B cell (primary cell): ENCODE measurements at regions of chr12 and their contacts with region 1.

Region 1: GRCh38 chr12:685388-685787 is 22.1 kb upstream of the NINJ2 start:
- DNase-seq: peak; percentile 93
- ATAC-seq: peak; percentile 78
- H3K4me3 ChIP-seq: peak overlapping the region in 4 of 5 experiments; percentile 5 to 31 (median 21)
- H3K4me3 Mint-ChIP-seq: peak overlapping the region; percentile 75
- H3K27ac ChIP-seq: peak overlapping the region; percentile 93 to 98
- H3K27ac Mint-ChIP-seq: peak overlapping the region; percentile 100
- H3K4me1 ChIP-seq: peaks cover 45 to 53% of the 10 kb centered on the region in 2 donors
- H3K4me1 Mint-ChIP-seq: peaks cover 49% of the 10 kb centered on the region
- H3K27me3 ChIP-seq: no peaks in the 10 kb centered on the region
- H3K27me3 Mint-ChIP-seq: no peaks in the 10 kb centered on the region
- CTCF ChIP-seq: no peak

Region 2: GRCh38 chr12:304805-305204 is 380.6 kb before region 1 on chr12:
- CTCF ChIA-PET with region 1: no interaction called
- POLR2A ChIA-PET with region 1: no interaction called
- intact Hi-C with region 1: no loop called
- DNase-seq: no peak
- ATAC-seq: no peak
- H3K4me3 ChIP-seq: no peak overlapping the region
- H3K4me3 Mint-ChIP-seq: no peak overlapping the region
- H3K27ac ChIP-seq: no peak overlapping the region
- H3K27ac Mint-ChIP-seq: no peak overlapping the region
- H3K4me1 ChIP-seq: no peaks in the 10 kb centered on the region
- H3K4me1 Mint-ChIP-seq: peaks cover 16% of the 10 kb centered on the region
- H3K27me3 ChIP-seq: no peaks in the 10 kb centered on the region
- H3K27me3 Mint-ChIP-seq: no peaks in the 10 kb centered on the region
- CTCF ChIP-seq: no peak

Region 3: DNA sequence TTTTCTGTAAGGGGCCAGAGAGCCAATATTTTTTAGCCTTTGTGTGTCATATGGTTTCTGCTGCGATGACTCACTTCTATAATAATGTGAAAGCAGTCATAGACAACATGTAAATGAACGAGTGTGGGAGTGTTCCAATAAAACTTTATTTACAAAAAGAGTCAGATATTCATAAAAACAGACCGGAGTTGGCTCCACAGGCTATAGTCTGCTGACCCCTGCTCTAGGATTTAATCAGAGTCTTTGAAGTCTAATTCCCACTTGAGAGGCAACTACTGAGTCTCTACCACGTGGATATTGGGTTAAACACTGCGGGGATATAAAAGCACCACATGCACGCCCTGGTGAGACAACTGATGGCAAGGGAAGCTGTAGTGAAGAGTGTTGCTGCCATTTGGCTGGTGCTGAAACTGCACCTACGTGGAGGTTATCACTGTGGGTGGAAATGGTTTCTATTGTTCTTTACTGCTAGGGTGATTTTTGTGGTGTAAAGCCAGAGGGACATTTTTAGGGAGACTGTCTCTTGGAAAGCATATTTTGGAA is 18.6 kb before region 1 on chr12:
- CTCF ChIA-PET with region 1: interaction called, 5 read pairs
- POLR2A ChIA-PET with region 1: interaction called, 4 read pairs
- intact Hi-C with region 1: loop called (anchors 2 kb)
- DNase-seq: no peak
- ATAC-seq: no peak
- H3K4me3 ChIP-seq: no peak overlapping the region
- H3K4me3 Mint-ChIP-seq: peak overlapping the region; percentile 54
- H3K27ac ChIP-seq: no peak overlapping the region
- H3K27ac Mint-ChIP-seq: peak overlapping the region; percentile 12
- H3K4me1 ChIP-seq: peaks cover 25 to 32% of the 10 kb centered on the region in 2 donors
- H3K4me1 Mint-ChIP-seq: peaks cover 45% of the 10 kb centered on the region
- H3K27me3 ChIP-seq: no peaks in the 10 kb centered on the region
- H3K27me3 Mint-ChIP-seq: no peaks in the 10 kb centered on the region
- CTCF ChIP-seq: no peak

Region 4: GRCh38 chr12:674272-674781 is 11.1 kb before region 1 on chr12:
- CTCF ChIA-PET with region 1: interaction called, 5 read pairs
- POLR2A ChIA-PET with region 1: interaction called, 10 read pairs
- intact Hi-C with region 1: loop called (anchors 1 kb)
- DNase-seq: peak; percentile 71
- ATAC-seq: peak; percentile 74
- H3K4me3 ChIP-seq: peak overlapping the region in 1 of 5 experiments; percentile 23
- H3K4me3 Mint-ChIP-seq: peak overlapping the region; percentile 87
- H3K27ac ChIP-seq: peak overlapping the region; percentile 74 to 77
- H3K27ac Mint-ChIP-seq: peak overlapping the region; percentile 90
- H3K4me1 ChIP-seq: peaks cover 26 to 39% of the 10 kb centered on the region in 2 donors
- H3K4me1 Mint-ChIP-seq: peaks cover 45% of the 10 kb centered on the region
- H3K27me3 ChIP-seq: no peaks in the 10 kb centered on the region
- H3K27me3 Mint-ChIP-seq: no peaks in the 10 kb centered on the region
- CTCF ChIP-seq: no peak

Region 5: GRCh38 chr12:724194-724855 is 38.9 kb after region 1 on chr12:
- CTCF ChIA-PET with region 1: no interaction called
- POLR2A ChIA-PET with region 1: interaction called, 7 read pairs
- intact Hi-C with region 1: loop called (anchors 5 kb)
- DNase-seq: no peak
- ATAC-seq: peak; percentile 39
- H3K4me3 ChIP-seq: no peak overlapping the region
- H3K4me3 Mint-ChIP-seq: no peak overlapping the region
- H3K27ac ChIP-seq: peak overlapping the region in 1 of 2 donors; percentile 60
- H3K27ac Mint-ChIP-seq: peak overlapping the region; percentile 39
- H3K4me1 ChIP-seq: peaks cover 14 to 15% of the 10 kb centered on the region in 2 donors
- H3K4me1 Mint-ChIP-seq: peaks cover 24% of the 10 kb centered on the region
- H3K27me3 ChIP-seq: no peaks in the 10 kb centered on the region
- H3K27me3 Mint-ChIP-seq: no peaks in the 10 kb centered on the region
- CTCF ChIP-seq: no peak

Region 6: DNA sequence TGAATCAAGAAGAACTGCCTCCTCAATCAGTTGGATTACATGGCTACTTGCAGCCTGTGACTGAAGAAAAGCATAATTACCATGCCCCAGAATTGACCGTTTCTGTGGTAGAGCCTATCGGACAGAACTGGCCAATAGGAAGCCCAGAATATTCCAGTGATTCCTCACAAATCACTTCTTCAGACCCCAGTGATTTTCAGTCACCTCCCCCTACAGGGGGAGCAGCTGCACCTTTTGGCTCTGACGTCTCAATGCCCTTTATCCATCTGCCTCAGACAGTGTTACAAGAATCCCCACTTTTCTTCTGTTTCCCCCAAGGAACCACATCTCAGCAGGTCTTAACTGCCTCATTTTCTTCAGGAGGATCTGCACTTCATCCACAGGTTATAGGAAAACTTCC is 183.3 kb after region 1 on chr12:
- CTCF ChIA-PET with region 1: no interaction called
- POLR2A ChIA-PET with region 1: no interaction called
- intact Hi-C with region 1: no loop called
- DNase-seq: no peak
- ATAC-seq: no peak
- H3K4me3 ChIP-seq: no peak overlapping the region
- H3K4me3 Mint-ChIP-seq: no peak overlapping the region
- H3K27ac ChIP-seq: no peak overlapping the region
- H3K27ac Mint-ChIP-seq: no peak overlapping the region
- H3K4me1 ChIP-seq: no peaks in the 10 kb centered on the region
- H3K4me1 Mint-ChIP-seq: no peaks in the 10 kb centered on the region
- H3K27me3 ChIP-seq: no peaks in the 10 kb centered on the region
- H3K27me3 Mint-ChIP-seq: no peaks in the 10 kb centered on the region
- CTCF ChIP-seq: no peak

Region 7: GRCh38 chr12:1398673-1399072 is 713.3 kb after region 1 on chr12:
- CTCF ChIA-PET with region 1: no interaction called
- POLR2A ChIA-PET with region 1: no interaction called
- intact Hi-C with region 1: no loop called
- DNase-seq: no peak
- ATAC-seq: no peak
- H3K4me3 ChIP-seq: no peak overlapping the region
- H3K4me3 Mint-ChIP-seq: no peak overlapping the region
- H3K27ac ChIP-seq: no peak overlapping the region
- H3K27ac Mint-ChIP-seq: no peak overlapping the region
- H3K4me1 ChIP-seq: no peaks in the 10 kb centered on the region
- H3K4me1 Mint-ChIP-seq: no peaks in the 10 kb centered on the region
- H3K27me3 ChIP-seq: no peaks in the 10 kb centered on the region
- H3K27me3 Mint-ChIP-seq: no peaks in the 10 kb centered on the region
- CTCF ChIP-seq: no peak